ENCODE measurements at regions of chr2 and their contacts with region 1.

Region 1: DNA sequence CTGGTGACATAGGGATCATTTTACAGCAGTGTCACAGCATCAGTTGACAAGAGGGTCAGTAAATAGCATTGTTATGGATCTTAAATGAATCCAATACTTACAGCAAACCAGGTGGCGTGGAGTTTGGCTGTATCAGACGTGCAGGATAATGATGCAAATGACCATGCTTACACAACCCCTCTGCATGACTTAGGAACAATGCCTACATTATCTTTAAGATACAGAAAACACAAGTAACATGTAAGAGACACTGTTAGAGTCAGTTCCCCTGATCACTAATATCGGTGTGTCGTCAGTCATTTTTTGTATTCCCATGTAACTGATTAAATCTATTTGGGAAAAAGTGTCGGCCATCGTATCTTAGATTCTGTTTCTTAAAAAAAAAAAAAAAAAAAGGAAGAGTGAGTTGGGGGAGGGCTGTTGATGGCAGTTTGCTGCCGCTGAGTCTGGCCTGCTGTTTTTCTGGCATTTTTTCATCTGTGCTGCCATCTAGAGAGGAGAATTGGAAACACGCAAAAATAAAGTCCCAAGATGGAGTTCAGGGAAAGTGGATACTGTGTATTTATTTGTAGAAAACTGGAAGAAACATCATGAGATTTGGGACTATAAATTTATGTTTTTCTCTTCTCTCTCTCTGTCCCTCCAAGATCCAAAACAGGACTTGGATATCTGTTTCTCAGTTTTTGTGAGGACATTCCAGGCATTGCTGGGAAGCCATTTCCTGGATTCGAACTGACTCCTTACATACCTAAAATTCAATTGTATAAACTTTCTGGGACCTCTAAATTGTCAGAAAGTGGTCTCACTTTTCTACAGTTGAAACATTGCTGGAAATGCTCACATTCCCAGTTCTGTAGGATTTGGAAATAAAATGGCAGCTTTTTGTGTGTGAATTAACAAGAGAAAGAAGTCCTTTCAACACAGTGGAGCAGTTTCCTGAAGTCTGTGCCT is 60.3 kb upstream of the AGPS start:
- DNase-seq: peak; percentile 37
- H3K4me3 Mint-ChIP-seq: no peak overlapping the region
- H3K27ac Mint-ChIP-seq: no peak overlapping the region
- H3K4me1 Mint-ChIP-seq: peaks cover 5% of the 10 kb centered on the region
- H3K27me3 Mint-ChIP-seq: no peaks in the 10 kb centered on the region

Region 2: GRCh38 chr2:177348733-177349693 is 16.7 kb after region 1 on chr2:
- CTCF ChIA-PET with region 1: interaction called, 17 read pairs
- POLR2A ChIA-PET with region 1: no interaction called
- intact Hi-C with region 1: no loop called
- DNase-seq: no peak
- H3K4me3 Mint-ChIP-seq: no peak overlapping the region
- H3K27ac Mint-ChIP-seq: no peak overlapping the region
- H3K4me1 Mint-ChIP-seq: no peaks in the 10 kb centered on the region
- H3K27me3 Mint-ChIP-seq: no peaks in the 10 kb centered on the region

Region 3: DNA sequence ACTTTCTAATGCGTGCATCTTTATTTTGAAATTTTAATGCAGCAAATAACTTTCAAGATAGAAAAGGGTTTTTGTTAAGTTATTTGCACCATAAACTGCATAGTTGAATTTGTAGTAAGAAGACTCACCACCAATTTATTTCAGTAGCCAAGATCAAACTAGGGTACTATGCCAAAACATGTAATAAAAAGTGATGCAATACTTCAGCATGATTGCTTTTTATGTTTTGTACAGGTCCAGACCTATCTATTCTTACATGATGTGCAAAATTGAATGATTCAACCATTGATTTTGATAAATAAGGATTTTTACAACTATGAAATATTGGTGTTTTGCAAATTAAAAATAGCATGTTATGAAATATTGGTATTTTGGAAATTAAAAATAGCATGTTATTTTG is 87.0 kb after region 1 on chr2:
- CTCF ChIA-PET with region 1: interaction called, 129 read pairs
- POLR2A ChIA-PET with region 1: no interaction called
- intact Hi-C with region 1: loop called (anchors 1 kb)
- DNase-seq: no peak
- H3K4me3 Mint-ChIP-seq: no peak overlapping the region
- H3K27ac Mint-ChIP-seq: no peak overlapping the region
- H3K4me1 Mint-ChIP-seq: peaks cover 33% of the 10 kb centered on the region
- H3K27me3 Mint-ChIP-seq: no peaks in the 10 kb centered on the region

Region 4: GRCh38 chr2:177618255-177619253 is 286.2 kb after region 1 on chr2:
- CTCF ChIA-PET with region 1: no interaction called
- POLR2A ChIA-PET with region 1: no interaction called
- intact Hi-C with region 1: loop called (anchors 5 kb)
- DNase-seq: peak; percentile 94
- H3K4me3 Mint-ChIP-seq: peak overlapping the region; percentile 92
- H3K27ac Mint-ChIP-seq: peak overlapping the region; percentile 99
- H3K4me1 Mint-ChIP-seq: peaks cover 4% of the 10 kb centered on the region
- H3K27me3 Mint-ChIP-seq: peaks cover 4% of the 10 kb centered on the region

Region 5: DNA sequence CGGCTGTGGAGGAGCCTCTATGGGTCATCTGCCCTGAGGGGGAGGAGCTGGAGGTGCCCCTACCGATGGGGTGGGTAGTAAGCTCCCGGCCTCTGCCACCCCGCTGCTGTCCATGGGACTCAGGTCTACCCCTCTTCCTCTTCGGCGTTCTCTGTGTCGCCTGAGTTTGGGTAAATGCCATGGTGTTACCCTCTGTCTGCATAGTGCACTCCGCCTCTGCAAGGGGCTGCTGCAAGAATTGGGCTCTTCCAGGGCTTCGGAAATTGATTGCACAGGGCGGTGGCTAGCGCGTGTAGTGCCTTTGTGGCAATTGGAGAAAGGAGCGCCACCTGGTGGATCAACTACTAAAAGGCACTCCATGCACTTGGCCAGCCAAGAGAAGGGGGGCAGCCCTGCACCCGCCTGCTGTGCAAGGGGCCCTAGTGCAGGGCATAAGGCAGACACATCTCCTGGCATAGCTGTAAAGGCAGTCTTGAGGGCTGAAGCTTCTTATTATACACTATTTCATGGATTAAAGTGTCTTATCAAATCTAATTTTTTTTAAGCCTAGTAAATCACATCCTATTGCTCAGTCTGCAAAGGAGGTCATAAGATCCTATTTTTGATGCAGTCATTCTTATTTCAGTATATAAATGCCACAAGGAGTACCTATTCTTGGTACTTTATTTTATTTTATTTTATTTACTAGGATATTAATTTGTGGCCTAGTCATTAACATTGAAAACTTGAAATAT is 431.4 kb after region 1 on chr2:
- CTCF ChIA-PET with region 1: interaction called, 16 read pairs
- POLR2A ChIA-PET with region 1: no interaction called
- intact Hi-C with region 1: loop called (anchors 1 kb)
- DNase-seq: peak; percentile 83
- H3K4me3 Mint-ChIP-seq: no peak overlapping the region
- H3K27ac Mint-ChIP-seq: no peak overlapping the region
- H3K4me1 Mint-ChIP-seq: peaks cover 3% of the 10 kb centered on the region
- H3K27me3 Mint-ChIP-seq: peaks cover 11% of the 10 kb centered on the region

Region 6: GRCh38 chr2:178568227-178568626 is 1235.9 kb after region 1 on chr2:
- CTCF ChIA-PET with region 1: no interaction called
- POLR2A ChIA-PET with region 1: no interaction called
- intact Hi-C with region 1: no loop called
- DNase-seq: no peak
- H3K4me3 Mint-ChIP-seq: no peak overlapping the region
- H3K27ac Mint-ChIP-seq: no peak overlapping the region
- H3K4me1 Mint-ChIP-seq: no peaks in the 10 kb centered on the region
- H3K27me3 Mint-ChIP-seq: no peaks in the 10 kb centered on the region